ENCODE measurements at regions of chr21 and their contacts with region 1.

Region 1: GRCh38 chr21:45831991-45832740 is 149.4 kb upstream of the COL6A1 start:
- DNase-seq: no peak
- ATAC-seq: no peak
- H3K4me3 ChIP-seq: no peak overlapping the region
- H3K4me3 Mint-ChIP-seq: no peak overlapping the region
- H3K27ac ChIP-seq: no peak overlapping the region
- H3K27ac Mint-ChIP-seq: no peak overlapping the region
- H3K4me1 ChIP-seq: peaks cover 9% of the 10 kb centered on the region
- H3K4me1 Mint-ChIP-seq: peaks cover 9% of the 10 kb centered on the region
- H3K27me3 ChIP-seq: no peaks in the 10 kb centered on the region
- H3K27me3 Mint-ChIP-seq: no peaks in the 10 kb centered on the region
- CTCF ChIP-seq: no peak

Region 2: DNA sequence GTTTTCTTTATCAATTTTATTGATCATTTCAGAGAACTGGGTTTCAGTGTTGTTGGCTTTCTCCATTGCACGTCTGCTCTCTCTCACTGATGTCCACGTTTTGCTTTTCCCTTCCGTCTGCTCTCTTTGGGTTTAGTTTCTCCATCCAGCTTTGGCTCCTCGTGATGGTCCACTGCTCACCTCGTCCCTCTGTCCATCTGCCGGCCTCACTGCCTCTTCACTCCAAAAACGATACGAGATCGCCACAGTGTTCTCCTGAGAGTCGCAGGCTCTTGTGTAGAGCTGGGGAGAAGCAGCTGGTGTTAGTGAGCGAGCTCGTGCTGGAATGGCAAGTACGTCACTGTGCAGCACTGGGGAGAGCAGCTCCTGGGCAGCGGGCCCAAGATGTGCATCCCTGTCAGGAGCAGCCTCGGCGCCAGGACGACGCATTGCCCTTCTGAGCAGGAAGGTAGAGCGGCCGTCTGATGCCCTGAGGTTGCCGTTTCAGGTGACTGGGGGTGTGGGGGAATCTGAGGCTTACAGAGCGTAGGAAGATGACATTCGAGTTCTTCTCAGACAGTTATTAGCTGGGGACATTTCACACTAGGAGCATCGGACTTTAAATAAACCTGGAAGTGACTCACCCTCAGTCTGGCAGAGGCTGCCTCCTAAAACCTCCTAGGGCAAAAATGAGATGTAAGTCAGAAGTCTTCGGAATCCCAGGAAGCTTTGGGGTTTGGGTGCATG is 220.1 kb before region 1 on chr21:
- CTCF ChIA-PET with region 1: no interaction called
- POLR2A ChIA-PET with region 1: no interaction called
- intact Hi-C with region 1: no loop called
- DNase-seq: peak in 1 of 9 experiments; percentile 4
- ATAC-seq: no peak
- H3K4me3 ChIP-seq: no peak overlapping the region
- H3K4me3 Mint-ChIP-seq: no peak overlapping the region
- H3K27ac ChIP-seq: no peak overlapping the region
- H3K27ac Mint-ChIP-seq: no peak overlapping the region
- H3K4me1 ChIP-seq: peaks cover 28% of the 10 kb centered on the region
- H3K4me1 Mint-ChIP-seq: peaks cover 39% of the 10 kb centered on the region
- H3K27me3 ChIP-seq: peaks cover 0 to 4% of the 10 kb centered on the region in 2 experiments
- H3K27me3 Mint-ChIP-seq: no peaks in the 10 kb centered on the region
- CTCF ChIP-seq: no peak

Region 3: DNA sequence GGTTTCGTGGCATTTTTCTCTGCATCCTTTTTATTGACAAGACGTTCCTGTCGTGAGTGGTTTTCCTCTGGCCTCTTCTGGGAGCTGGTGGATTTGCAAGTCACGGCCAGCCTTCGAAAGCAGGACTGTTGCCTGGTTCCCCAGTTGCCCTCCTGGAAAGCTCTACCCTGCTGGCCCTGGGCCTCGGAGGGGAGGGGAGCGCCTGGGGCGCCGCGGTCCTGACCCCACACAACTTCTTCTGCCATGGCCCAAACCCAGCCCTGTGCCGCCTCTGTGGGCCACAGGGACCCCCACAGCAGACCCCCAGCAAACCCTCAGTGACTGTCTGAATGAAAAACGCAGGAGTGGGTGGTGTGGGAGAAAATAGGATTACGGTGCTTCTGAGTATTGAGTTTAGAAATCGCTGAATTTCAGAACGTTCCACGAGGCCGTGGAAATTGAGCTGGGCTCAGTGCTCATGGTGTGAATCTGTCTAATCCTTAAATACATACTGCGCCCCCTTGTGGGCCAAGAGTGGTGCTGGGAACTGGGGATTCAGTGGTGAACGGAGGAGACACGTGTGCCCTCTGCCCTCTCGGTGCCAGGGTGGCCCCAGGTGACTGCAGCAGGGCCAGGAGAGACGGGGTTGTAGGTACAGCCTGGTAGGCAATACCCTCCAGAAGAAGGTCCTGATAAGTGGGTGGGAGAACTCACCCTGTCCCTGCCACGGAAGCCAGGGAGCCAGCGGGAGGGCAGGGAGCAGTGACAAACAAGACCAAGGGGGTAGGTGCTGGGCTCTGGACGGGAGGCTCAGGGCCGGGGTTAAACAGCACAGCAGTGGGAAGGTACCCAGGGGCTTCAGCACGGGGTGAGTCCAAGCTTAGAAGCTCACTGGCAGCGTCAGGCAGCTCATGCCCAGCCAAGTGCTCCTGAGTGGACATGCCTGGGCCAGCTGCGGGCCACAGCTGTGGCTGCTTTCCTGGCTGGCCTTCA is 48.2 kb after region 1 on chr21:
- CTCF ChIA-PET with region 1: no interaction called
- POLR2A ChIA-PET with region 1: no interaction called
- intact Hi-C with region 1: loop called in 1 of 2 experiments (anchors 5 kb)
- DNase-seq: peak; percentile 38 to 79 (median 71)
- ATAC-seq: peak; percentile 86
- H3K4me3 ChIP-seq: no peak overlapping the region
- H3K4me3 Mint-ChIP-seq: peak overlapping the region; percentile 13
- H3K27ac ChIP-seq: no peak overlapping the region
- H3K27ac Mint-ChIP-seq: peak overlapping the region; percentile 76
- H3K4me1 ChIP-seq: peaks cover 29% of the 10 kb centered on the region
- H3K4me1 Mint-ChIP-seq: peaks cover 48% of the 10 kb centered on the region
- H3K27me3 ChIP-seq: peaks cover 0 to 4% of the 10 kb centered on the region in 2 experiments
- H3K27me3 Mint-ChIP-seq: peaks cover 4% of the 10 kb centered on the region
- CTCF ChIP-seq: peak; percentile 73

Measured in CD8-positive, alpha-beta T cell (primary cell).